Dendritic cell treated with granulocyte-macrophage colony-stimulating factor and Interleukin-4, amounts not matched to agents 40 ng/mL and 50 ng/mL, for 4 days (primary cell): ENCODE measurements at regions of chr20 and their contacts with region 1.

Region 1: DNA sequence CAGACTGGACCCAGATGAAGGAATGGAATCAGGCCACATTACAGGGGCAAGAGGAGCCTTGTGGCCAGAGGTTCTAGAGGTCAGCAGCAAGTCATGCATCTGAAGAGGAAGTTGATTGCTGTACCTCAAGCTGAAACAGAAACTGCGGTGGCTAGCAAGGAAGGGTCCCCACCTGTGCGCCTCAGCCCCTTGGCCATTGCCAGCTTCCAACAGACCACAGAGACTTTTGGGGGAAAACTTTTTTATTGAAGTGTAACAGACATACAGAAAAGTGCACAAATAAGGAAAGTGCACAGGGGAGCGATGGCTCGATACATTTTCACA is 26.8 kb upstream of the SLC9A8 start:
- H3K4me3 Mint-ChIP-seq: peak overlapping the region; percentile 37
- H3K27ac Mint-ChIP-seq: peak overlapping the region; percentile 70
- H3K4me1 Mint-ChIP-seq: peaks cover 42% of the 10 kb centered on the region
- H3K27me3 Mint-ChIP-seq: no peaks in the 10 kb centered on the region

Region 2: GRCh38 chr20:49729721-49730138 is 56.1 kb before region 1 on chr20:
- intact Hi-C with region 1: no loop called
- H3K4me3 Mint-ChIP-seq: no peak overlapping the region
- H3K27ac Mint-ChIP-seq: no peak overlapping the region
- H3K4me1 Mint-ChIP-seq: peaks cover 19% of the 10 kb centered on the region
- H3K27me3 Mint-ChIP-seq: no peaks in the 10 kb centered on the region

Region 3: GRCh38 chr20:49821870-49822331 is 36.1 kb after region 1 on chr20:
- intact Hi-C with region 1: loop called (anchors 5 kb)
- H3K4me3 Mint-ChIP-seq: no peak overlapping the region
- H3K27ac Mint-ChIP-seq: peak overlapping the region; percentile 56
- H3K4me1 Mint-ChIP-seq: peaks cover 20% of the 10 kb centered on the region
- H3K27me3 Mint-ChIP-seq: no peaks in the 10 kb centered on the region